ENCODE measurements at regions of chr17 and their contacts with region 1.

Region 1: DNA sequence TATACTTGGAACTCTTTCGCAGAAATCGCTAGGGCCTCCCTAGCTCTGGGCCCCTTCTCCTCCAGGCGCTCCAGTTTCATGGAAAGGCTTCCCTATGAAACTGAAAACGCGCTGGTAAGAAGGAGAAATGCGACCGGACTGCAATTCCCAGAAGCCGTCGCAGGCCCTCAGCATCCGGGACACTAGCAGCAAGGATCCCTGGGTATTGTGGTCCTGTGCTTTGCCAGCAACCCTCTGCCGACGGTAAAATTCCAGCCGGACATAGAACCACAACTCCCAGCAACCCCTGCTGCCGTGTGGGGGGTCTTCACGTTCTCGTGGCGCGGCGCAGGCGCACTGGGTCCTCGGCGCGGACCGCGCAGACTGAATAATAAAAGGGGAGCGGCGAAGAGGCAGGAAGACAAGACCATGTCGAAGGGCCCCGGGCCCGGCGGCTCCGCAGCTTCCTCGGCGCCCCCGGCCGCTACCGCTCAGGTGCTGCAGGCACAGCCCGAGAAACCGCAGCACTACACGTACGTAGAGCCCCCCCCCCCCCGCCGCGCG is at the start of gene UNK:
- DNase-seq: peak; percentile 99
- ATAC-seq: peak; percentile 80
- H3K4me3 ChIP-seq: peak within 1 kb of the TSS; percentile 57 to 82 (median 81)
- H3K27ac ChIP-seq: peak within 1 kb of the TSS; percentile 93
- H3K4me1 ChIP-seq: peaks cover 64% of the 10 kb centered on the region
- H3K27me3 ChIP-seq: no peaks in the 10 kb centered on the region; a peak in 1 of 5 replicates
- CTCF ChIP-seq: 0 out of 2 replicates have a peak, but pooled peaks have one; percentile 11
- EP300 ChIP-seq: peak; percentile 62 to 68; a peak in 3 of 4 replicates
- POLR2A ChIP-seq: peak; percentile 63 to 82
- RAD21 ChIP-seq: peak; percentile 61
- total RNA-seq, gene UNK: 28.6 and 33.0 TPM in 2 replicates

Region 2: DNA sequence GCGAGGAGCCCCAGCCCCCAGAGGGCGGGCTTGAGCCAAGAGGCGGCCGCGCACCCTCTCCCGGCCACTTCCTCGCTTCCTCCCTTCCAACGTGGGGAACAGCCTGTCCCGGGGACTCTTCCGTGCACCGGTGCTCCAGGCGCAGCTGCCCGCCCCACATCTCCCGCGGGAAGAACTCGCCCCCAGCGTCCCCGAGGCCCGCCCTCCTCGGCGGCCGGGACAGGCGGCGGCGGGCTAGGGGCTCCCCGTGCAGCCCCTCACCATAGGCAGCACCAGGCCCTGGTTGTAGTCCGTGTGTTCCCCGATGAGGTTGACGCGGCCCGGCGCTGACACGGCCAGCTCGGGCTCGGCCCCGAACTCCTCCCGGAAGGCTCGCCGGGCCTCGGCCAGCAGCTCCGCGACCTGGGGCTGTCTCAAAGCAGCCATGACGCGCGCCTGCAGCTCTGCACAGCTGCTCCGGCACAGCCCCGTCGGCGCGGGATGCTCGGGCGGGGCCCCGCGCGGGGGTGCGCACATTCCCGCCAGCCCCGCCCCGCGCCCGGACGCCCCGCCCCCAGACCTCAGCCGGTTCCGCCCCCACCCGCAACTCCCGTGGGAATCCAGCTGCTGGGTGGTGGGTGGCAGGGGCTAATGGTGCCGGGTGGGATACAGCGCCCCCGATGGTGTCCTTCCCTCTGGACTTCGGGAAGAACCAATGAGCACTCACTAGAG is 19.7 kb before region 1 on chr17 and contains the start of gene GALK1:
- CTCF ChIA-PET with region 1: no interaction called
- POLR2A ChIA-PET with region 1: interaction called, 390 read pairs
- in situ Hi-C with region 1: no loop called
- intact Hi-C with region 1: loop called (anchors 2 kb)
- DNase-seq: peak; percentile 59
- ATAC-seq: peak; percentile 73
- H3K4me3 ChIP-seq: peak within 1 kb of the TSS; percentile 77 to 87 (median 78)
- H3K27ac ChIP-seq: peak within 1 kb of the TSS; percentile 79
- H3K4me1 ChIP-seq: peaks cover 60% of the 10 kb centered on the region
- H3K27me3 ChIP-seq: no peaks in the 10 kb centered on the region
- CTCF ChIP-seq: peak; percentile 78
- EP300 ChIP-seq: no peak
- POLR2A ChIP-seq: peak in 1 of 2 experiments; percentile 73; a peak in 2 of 4 replicates
- RAD21 ChIP-seq: peak; percentile 46
- total RNA-seq, gene GALK1: 93.6 and 95.6 TPM in 2 replicates

Region 3: GRCh38 chr17:75795820-75796607 is 11.5 kb after region 1 on chr17:
- CTCF ChIA-PET with region 1: no interaction called
- POLR2A ChIA-PET with region 1: interaction called, 52 read pairs
- in situ Hi-C with region 1: no loop called
- intact Hi-C with region 1: no loop called
- DNase-seq: no peak
- ATAC-seq: peak; percentile 54
- H3K4me3 ChIP-seq: no peak overlapping the region
- H3K27ac ChIP-seq: peak overlapping the region; percentile 47
- H3K4me1 ChIP-seq: peaks cover 18% of the 10 kb centered on the region
- H3K27me3 ChIP-seq: no peaks in the 10 kb centered on the region
- CTCF ChIP-seq: no peak
- EP300 ChIP-seq: no peak
- POLR2A ChIP-seq: no peak
- RAD21 ChIP-seq: no peak